AG04450 (cell line): ENCODE measurements at regions of chr2 and their contacts with region 1.

Region 1: DNA sequence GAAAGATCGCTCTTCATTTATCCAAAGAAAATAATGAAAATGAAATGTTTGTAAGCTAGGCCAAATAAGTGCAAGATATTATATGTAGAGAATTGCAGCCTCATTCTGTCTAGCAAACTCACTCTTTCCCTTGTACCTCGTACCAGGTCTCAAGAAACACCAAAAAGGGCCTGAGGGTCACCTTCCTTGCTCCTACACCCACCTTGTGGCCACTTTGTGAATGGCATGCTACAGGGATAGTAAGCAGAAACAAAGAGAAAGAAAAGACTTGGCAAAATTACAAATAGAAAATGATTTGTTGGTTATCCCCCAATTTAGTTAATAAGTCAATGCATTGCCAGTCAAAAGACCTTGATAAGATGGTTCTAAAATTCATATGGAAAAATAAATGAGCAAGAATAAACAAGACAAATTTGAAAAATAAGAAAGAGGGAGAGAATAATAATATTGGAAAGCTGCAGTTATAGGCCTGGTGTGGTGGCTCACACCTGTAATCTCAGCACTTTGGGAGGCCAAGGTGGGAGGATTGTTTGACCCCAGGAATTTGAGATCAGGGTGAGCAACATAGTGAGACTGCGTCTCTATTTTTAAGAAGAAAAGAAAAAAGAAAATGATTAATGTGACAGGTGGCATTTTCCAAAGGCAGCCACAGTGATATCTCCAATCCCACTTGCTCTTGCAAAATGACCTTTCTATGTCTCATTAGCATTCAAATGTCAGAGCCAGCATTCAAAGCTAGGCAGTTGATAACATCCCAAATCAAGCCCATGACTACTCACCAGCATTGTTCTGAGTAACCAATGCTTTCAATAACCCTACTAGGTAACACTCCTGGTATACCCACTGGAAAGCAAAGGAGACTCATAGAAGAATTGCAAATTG is 38.8 kb upstream of the BMP10 start:
- DNase-seq: peak; percentile 46
- H3K4me3 ChIP-seq: no peak overlapping the region
- H3K27ac ChIP-seq: no peak overlapping the region
- H3K27me3 ChIP-seq: no peaks in the 10 kb centered on the region
- CTCF ChIP-seq: peak; percentile 95

Region 2: GRCh38 chr2:68467077-68467960 is 442.7 kb before region 1 on chr2 and contains the starts of genes APLF and FBXO48:
- CTCF ChIA-PET with region 1: interaction called, 14 read pairs
- POLR2A ChIA-PET with region 1: no interaction called
- DNase-seq: peak; percentile 97
- H3K4me3 ChIP-seq: peak within 1 kb of the TSS; percentile 98
- H3K27ac ChIP-seq: peak within 1 kb of the TSS; percentile 77
- H3K27me3 ChIP-seq: no peaks in the 10 kb centered on the region
- CTCF ChIP-seq: no peak
- polyA plus RNA-seq, gene APLF: 2.5 and 3.6 TPM in 2 replicates
- polyA plus RNA-seq, gene FBXO48: 0.66 and 0.89 TPM in 2 replicates

Region 3: GRCh38 chr2:68951899-68952298 is 41.9 kb after region 1 on chr2:
- CTCF ChIA-PET with region 1: no interaction called
- POLR2A ChIA-PET with region 1: no interaction called
- DNase-seq: no peak
- H3K4me3 ChIP-seq: no peak overlapping the region
- H3K27ac ChIP-seq: no peak overlapping the region
- H3K27me3 ChIP-seq: no peaks in the 10 kb centered on the region
- CTCF ChIP-seq: no peak

Region 4: GRCh38 chr2:68995916-68996315 is 85.9 kb after region 1 on chr2:
- CTCF ChIA-PET with region 1: no interaction called
- POLR2A ChIA-PET with region 1: no interaction called
- DNase-seq: no peak
- H3K4me3 ChIP-seq: no peak overlapping the region
- H3K27ac ChIP-seq: no peak overlapping the region
- H3K27me3 ChIP-seq: no peaks in the 10 kb centered on the region
- CTCF ChIP-seq: no peak

Region 5: GRCh38 chr2:69061525-69061924 is 151.5 kb after region 1 on chr2:
- CTCF ChIA-PET with region 1: no interaction called
- POLR2A ChIA-PET with region 1: no interaction called
- DNase-seq: no peak
- H3K4me3 ChIP-seq: no peak overlapping the region
- H3K27ac ChIP-seq: no peak overlapping the region
- H3K27me3 ChIP-seq: no peaks in the 10 kb centered on the region
- CTCF ChIP-seq: peak; percentile 16; the same call in 1 of the 2 replicates